Mammary epithelial cell (primary cell): ENCODE measurements at regions of chr2 and their contacts with region 1.

Region 1: DNA sequence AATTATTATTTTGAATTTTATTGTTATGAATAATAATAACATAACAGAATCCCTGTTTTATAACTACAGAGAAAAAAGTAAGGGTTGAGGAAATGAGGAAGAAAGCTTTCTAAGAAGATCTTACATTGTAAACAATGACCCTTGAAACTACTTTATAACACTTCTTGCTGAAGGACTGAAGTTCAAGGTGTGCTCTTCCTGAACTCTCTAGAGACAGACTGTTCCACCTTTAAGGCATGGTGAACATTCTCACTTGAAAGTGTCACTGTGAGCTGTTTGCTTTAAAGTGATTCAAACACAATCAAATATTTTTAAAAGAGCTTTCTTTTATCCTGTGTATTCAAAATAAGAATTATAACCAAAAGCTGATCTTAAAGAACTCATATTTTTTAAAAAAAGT is 131.5 kb downstream of the DNAH7 start:
- DNase-seq: no peak
- H3K4me3 ChIP-seq: no peak overlapping the region
- H3K27ac ChIP-seq: no peak overlapping the region
- H3K4me1 ChIP-seq: no peaks in the 10 kb centered on the region
- H3K27me3 ChIP-seq: no peaks in the 10 kb centered on the region
- CTCF ChIP-seq: no peak

Region 2: DNA sequence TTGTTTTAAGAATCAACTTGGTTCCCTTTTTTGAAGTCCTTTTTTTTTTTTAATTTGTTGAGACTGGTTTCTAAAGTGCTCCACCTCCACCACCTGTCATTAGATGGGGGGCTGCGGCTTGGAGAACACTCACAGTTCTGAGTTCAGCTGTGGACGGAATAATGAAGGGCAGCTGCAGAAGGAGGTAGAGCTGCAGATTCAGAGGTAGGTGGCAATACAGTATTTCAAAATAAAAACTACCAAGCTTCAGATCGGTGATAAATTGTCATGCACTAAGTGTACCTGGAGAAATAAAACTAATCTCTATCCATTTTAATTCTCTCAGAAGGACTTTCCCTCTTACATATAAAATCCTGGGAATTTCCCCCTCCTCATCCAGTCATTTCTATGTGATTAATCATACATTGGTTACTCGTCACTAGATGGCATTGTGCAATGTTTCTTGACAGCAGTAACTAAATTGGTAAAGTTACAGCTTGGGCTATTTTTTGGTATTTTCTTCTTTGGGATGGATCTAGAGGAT is 361.2 kb before region 1 on chr2:
- CTCF ChIA-PET with region 1: interaction called, 4 read pairs
- dilution Hi-C with region 1: no loop called
- in situ Hi-C with region 1: no loop called
- intact Hi-C with region 1: loop called (anchors 5 kb)
- DNase-seq: peak; percentile 83
- H3K4me3 ChIP-seq: no peak overlapping the region
- H3K27ac ChIP-seq: peak overlapping the region; percentile 75
- H3K4me1 ChIP-seq: peaks cover 4% of the 10 kb centered on the region
- H3K27me3 ChIP-seq: no peaks in the 10 kb centered on the region
- CTCF ChIP-seq: no peak

Region 3: GRCh38 chr2:195664528-195664927 is 272.6 kb before region 1 on chr2:
- CTCF ChIA-PET with region 1: no interaction called
- dilution Hi-C with region 1: loop called (anchors 10 kb)
- in situ Hi-C with region 1: loop called in 1 of 2 experiments (anchors 10 kb)
- intact Hi-C with region 1: loop called (anchors 2 kb)
- DNase-seq: no peak
- H3K4me3 ChIP-seq: no peak overlapping the region
- H3K27ac ChIP-seq: no peak overlapping the region
- H3K4me1 ChIP-seq: no peaks in the 10 kb centered on the region
- H3K27me3 ChIP-seq: no peaks in the 10 kb centered on the region
- CTCF ChIP-seq: peak in 1 of 2 donors; percentile 2